ENCODE measurements at regions of chr14 and their contacts with region 1.

Region 1: DNA sequence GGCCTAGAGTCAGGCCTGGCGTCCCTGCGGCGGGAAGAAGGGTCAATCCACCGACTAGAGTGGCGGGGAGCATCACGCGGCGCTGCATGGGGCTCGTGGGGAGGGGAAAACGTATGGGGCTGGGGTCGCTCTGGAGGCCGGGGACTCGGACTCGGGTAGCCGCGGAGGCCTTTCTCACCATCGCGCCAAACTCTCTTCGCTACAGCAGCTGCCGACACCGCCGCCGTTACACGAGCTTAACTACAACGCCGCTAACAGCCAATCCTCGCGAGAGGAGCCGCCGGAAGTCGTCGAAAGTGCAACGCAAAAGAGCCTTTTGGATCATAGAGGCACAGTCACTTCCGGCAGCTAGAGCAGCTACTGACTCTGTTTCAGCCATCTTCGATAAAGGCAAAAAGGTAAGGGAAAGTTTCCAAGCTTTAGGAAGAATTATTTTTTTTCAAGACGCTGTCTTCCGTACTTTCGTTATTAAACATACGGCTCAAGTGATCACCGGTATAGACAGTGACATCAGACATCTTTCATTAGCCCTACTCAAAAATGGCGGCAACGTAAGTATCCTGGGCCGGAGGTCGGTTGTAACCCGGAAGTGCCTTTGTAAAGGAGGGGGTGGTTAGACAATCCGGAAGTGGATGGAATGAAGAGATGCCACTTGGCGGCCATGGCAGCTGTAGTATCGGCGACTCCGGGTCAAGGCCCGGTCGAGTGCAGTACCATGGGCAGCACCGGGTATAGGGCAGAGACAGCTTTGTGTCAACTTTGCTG is at the starts of genes ERH and SLC39A9:
- DNase-seq: peak; percentile 87 to 98 (median 94)
- ATAC-seq: peak; percentile 79
- H3K4me3 ChIP-seq: peak within 1 kb of the TSS; percentile 69 to 78
- H3K4me3 Mint-ChIP-seq: peak within 1 kb of the TSS; percentile 99
- H3K27ac ChIP-seq: peak within 1 kb of the TSS; percentile 86 to 92
- H3K27ac Mint-ChIP-seq: peak within 1 kb of the TSS; percentile 100
- H3K4me1 ChIP-seq: peaks cover 58% of the 10 kb centered on the region
- H3K4me1 Mint-ChIP-seq: peaks cover 78% of the 10 kb centered on the region
- H3K27me3 ChIP-seq: no peaks in the 10 kb centered on the region
- H3K27me3 Mint-ChIP-seq: no peaks in the 10 kb centered on the region
- CTCF ChIP-seq: no peak
- total RNA-seq, gene ERH: 95.6 to 97.2 TPM
- total RNA-seq, gene SLC39A9: 15.8 to 18.5 TPM

Region 2: GRCh38 chr14:67487937-67488893 is 1910.0 kb before region 1 on chr14 and contains the start of gene TMEM229B:
- CTCF ChIA-PET with region 1: no interaction called
- POLR2A ChIA-PET with region 1: no interaction called
- intact Hi-C with region 1: loop called in 1 of 2 experiments (anchors 5 kb)
- DNase-seq: peak; percentile 43 to 90 (median 77)
- ATAC-seq: peak; percentile 96
- H3K4me3 ChIP-seq: peak within 1 kb of the TSS; percentile 68 to 84
- H3K4me3 Mint-ChIP-seq: peak within 1 kb of the TSS; percentile 99
- H3K27ac ChIP-seq: peak within 1 kb of the TSS; percentile 92 to 93
- H3K27ac Mint-ChIP-seq: peak within 1 kb of the TSS; percentile 100
- H3K4me1 ChIP-seq: peaks cover 51% of the 10 kb centered on the region
- H3K4me1 Mint-ChIP-seq: peaks cover 79% of the 10 kb centered on the region
- H3K27me3 ChIP-seq: no peaks in the 10 kb centered on the region
- H3K27me3 Mint-ChIP-seq: no peaks in the 10 kb centered on the region
- CTCF ChIP-seq: no peak
- total RNA-seq, gene TMEM229B: 4.5 to 4.8 TPM

Region 3: DNA sequence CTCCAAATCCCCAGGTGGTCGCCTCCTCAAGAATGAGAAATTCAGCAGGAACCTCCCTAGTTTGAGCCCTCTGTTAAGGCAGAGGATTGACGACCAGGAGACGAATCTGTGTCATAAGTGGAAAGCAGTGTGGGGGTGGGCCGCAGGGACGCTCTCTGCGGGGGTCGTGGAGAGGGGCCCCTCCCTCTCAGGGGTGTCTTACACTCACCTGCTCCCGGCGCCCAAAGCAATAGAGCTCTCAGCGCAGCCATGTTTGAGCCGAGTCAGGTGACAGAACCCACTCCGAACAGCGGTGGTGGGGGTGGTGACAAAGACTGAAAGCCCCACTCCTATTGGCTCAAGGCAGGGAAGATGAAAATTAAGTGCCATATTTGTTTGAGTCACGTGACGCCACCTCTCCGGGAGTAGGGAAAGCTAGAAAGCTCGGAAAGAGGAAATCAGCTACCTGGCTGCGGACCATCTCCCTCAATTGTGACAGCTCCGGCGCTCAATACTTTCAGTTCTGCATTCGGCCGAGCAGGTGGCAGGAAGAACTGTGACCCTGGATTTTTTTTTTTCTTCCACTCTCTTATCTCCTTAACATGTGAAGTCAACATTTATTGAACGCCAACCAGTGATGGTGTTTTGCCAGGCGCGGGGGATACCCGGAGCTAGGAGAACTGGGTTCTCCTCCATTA is 1581.8 kb before region 1 on chr14 and contains the start of gene ZFYVE26:
- CTCF ChIA-PET with region 1: no interaction called
- POLR2A ChIA-PET with region 1: no interaction called
- intact Hi-C with region 1: loop called (anchors 2 to 5 kb)
- DNase-seq: peak; percentile 73 to 96 (median 88)
- ATAC-seq: peak; percentile 90
- H3K4me3 ChIP-seq: peak within 1 kb of the TSS; percentile 65 to 85
- H3K4me3 Mint-ChIP-seq: peak within 1 kb of the TSS; percentile 97
- H3K27ac ChIP-seq: peak within 1 kb of the TSS; percentile 65 to 73
- H3K27ac Mint-ChIP-seq: peak within 1 kb of the TSS; percentile 97
- H3K4me1 ChIP-seq: peaks cover 28% of the 10 kb centered on the region
- H3K4me1 Mint-ChIP-seq: peaks cover 55% of the 10 kb centered on the region
- H3K27me3 ChIP-seq: no peaks in the 10 kb centered on the region
- H3K27me3 Mint-ChIP-seq: no peaks in the 10 kb centered on the region
- CTCF ChIP-seq: no peak
- total RNA-seq, gene ZFYVE26: 20.4 to 21.4 TPM

Region 4: DNA sequence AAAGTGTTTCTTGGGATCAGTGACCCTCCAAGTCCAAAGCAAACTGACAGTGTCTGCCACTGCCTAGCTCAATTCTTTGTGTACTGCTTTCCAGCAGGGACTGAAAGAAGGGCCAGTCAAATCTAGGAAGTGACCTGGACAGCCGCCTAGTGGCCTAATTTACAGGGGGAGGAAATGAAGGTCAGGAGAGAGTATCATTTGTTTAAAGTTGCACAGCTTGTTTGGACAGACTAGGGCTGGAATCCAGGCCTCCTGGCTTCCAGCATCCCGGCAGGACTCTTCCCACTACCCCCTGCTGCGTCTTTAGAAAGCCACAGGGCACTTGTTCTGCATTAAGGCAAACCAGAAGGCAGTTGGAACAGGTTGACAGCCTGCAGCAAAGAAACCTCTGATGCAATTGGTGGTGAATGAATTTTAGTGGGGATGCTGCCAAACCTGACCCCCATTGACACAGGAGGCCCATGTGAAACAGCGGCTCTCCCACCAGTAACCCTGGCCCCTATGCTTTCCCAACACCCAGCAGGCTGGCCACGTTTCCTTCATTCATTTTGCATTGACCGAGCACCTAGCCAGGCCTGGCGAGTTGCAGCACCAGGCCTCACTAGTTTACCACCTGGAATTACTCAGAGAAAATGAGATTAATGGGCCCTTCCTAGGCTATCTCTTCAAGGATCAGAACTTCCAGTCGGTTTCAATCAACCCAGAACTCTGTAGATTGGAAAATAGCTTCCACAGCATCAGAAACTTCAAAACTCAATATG is 110.0 kb before region 1 on chr14:
- CTCF ChIA-PET with region 1: no interaction called
- POLR2A ChIA-PET with region 1: no interaction called
- intact Hi-C with region 1: no loop called
- DNase-seq: peak in 1 of 9 experiments; percentile 2
- ATAC-seq: no peak
- H3K4me3 ChIP-seq: no peak overlapping the region
- H3K4me3 Mint-ChIP-seq: no peak overlapping the region
- H3K27ac ChIP-seq: no peak overlapping the region
- H3K27ac Mint-ChIP-seq: no peak overlapping the region
- H3K4me1 ChIP-seq: no peaks in the 10 kb centered on the region
- H3K4me1 Mint-ChIP-seq: no peaks in the 10 kb centered on the region
- H3K27me3 ChIP-seq: no peaks in the 10 kb centered on the region
- H3K27me3 Mint-ChIP-seq: peaks cover 10% of the 10 kb centered on the region
- CTCF ChIP-seq: no peak

Region 5: GRCh38 chr14:69387311-69387710 is 10.9 kb before region 1 on chr14:
- CTCF ChIA-PET with region 1: no interaction called
- POLR2A ChIA-PET with region 1: interaction called, 12 read pairs
- intact Hi-C with region 1: no loop called
- DNase-seq: no peak
- ATAC-seq: no peak
- H3K4me3 ChIP-seq: no peak overlapping the region
- H3K4me3 Mint-ChIP-seq: no peak overlapping the region
- H3K27ac ChIP-seq: no peak overlapping the region
- H3K27ac Mint-ChIP-seq: no peak overlapping the region
- H3K4me1 ChIP-seq: peaks cover 6% of the 10 kb centered on the region
- H3K4me1 Mint-ChIP-seq: peaks cover 52% of the 10 kb centered on the region
- H3K27me3 ChIP-seq: no peaks in the 10 kb centered on the region
- H3K27me3 Mint-ChIP-seq: no peaks in the 10 kb centered on the region
- CTCF ChIP-seq: no peak

Region 6: GRCh38 chr14:70359181-70360090 is 961.2 kb after region 1 on chr14 and contains the start of gene COX16:
- CTCF ChIA-PET with region 1: no interaction called
- POLR2A ChIA-PET with region 1: interaction called, 3 read pairs
- intact Hi-C with region 1: loop called in 1 of 2 experiments (anchors 2 kb)
- DNase-seq: peak; percentile 65 to 94 (median 79)
- ATAC-seq: peak; percentile 95
- H3K4me3 ChIP-seq: peak within 1 kb of the TSS; percentile 84 to 87
- H3K4me3 Mint-ChIP-seq: peak within 1 kb of the TSS; percentile 99
- H3K27ac ChIP-seq: peak within 1 kb of the TSS; percentile 56 to 75
- H3K27ac Mint-ChIP-seq: peak within 1 kb of the TSS; percentile 94
- H3K4me1 ChIP-seq: peaks cover 17% of the 10 kb centered on the region
- H3K4me1 Mint-ChIP-seq: peaks cover 47% of the 10 kb centered on the region
- H3K27me3 ChIP-seq: no peaks in the 10 kb centered on the region
- H3K27me3 Mint-ChIP-seq: no peaks in the 10 kb centered on the region
- CTCF ChIP-seq: no peak
- total RNA-seq, gene COX16: 15.4 to 22.4 TPM

Region 7: DNA sequence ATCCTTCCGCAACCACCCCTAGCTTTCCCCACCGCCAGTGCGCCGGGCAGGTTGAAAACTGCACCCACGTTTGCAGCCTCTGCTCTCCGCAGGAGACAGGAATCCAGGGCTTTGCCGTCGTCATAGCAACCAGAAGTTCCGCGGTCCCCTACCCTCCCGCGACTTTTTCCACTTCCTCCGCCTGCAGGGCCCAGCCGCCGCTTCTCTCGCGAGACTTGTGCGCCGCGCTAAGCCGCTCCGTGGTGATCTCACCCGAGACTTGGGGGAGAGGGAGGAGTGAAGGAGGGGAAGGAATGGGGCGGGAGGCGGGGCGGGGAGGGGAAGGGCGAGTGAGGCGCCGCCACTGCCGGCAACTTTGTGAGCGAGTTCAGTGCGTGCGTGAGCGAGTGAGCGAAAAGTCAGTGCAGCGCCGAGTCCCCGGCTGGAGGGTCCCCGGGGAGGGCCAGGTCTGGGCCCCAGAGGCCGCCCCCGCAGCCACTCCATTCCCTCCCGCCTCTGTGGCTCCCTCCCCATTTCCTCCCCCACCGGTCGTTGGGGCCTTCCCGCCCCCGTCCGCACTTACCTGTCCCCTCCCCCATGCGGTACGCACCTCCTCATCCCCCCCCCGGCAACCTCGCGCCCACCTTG is 1922.0 kb after region 1 on chr14:
- CTCF ChIA-PET with region 1: no interaction called
- POLR2A ChIA-PET with region 1: no interaction called
- intact Hi-C with region 1: loop called (anchors 5 kb)
- DNase-seq: peak; percentile 96 to 100 (median 98)
- ATAC-seq: peak; percentile 87
- H3K4me3 ChIP-seq: peak within 1 kb of the TSS; percentile 83 to 84
- H3K4me3 Mint-ChIP-seq: peak within 1 kb of the TSS; percentile 85
- H3K27ac ChIP-seq: peak within 1 kb of the TSS; percentile 79 to 91
- H3K27ac Mint-ChIP-seq: peak within 1 kb of the TSS; percentile 92
- H3K4me1 ChIP-seq: peaks cover 32% of the 10 kb centered on the region
- H3K4me1 Mint-ChIP-seq: peaks cover 39% of the 10 kb centered on the region
- H3K27me3 ChIP-seq: no peaks in the 10 kb centered on the region
- H3K27me3 Mint-ChIP-seq: no peaks in the 10 kb centered on the region
- CTCF ChIP-seq: no peak